B cell (primary cell): ENCODE measurements at regions of chr3 and their contacts with region 1.

Region 1: DNA sequence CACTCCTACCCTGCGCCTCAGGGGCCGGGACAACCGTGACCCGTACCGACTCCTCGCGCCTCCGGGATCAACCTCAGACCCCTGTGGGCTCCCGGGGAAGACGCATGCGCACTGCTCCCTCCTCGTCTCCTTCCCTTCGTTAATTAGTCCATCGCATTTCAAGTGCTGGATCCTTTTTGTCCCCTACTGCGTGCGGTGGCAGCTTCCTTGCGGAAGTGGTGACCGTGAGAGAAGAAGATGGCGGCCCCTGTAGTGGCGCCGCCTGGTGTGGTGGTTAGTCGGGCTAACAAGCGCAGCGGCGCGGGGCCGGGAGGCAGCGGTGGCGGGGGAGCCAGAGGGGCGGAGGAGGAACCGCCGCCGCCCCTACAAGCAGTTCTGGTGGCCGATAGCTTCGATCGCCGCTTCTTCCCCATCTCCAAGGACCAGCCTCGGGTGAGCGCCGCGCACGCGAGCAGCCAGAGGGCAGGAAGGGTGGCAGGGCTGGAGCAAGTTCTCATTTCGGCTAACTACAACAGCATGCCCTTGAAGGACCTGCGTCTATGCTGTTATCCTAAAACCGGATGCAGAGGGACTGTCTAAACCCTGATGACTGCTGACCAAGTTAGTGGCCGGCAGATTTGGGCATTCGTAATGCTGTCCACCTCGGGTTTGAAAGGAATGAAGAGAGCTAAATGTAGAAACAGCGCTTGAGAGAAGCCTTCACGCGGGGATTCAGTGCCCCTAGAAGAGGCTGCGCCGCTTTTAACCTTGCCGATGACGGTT is at the start of gene EIF2B5:
- DNase-seq: peak; percentile 94
- ATAC-seq: peak; percentile 87
- H3K4me3 ChIP-seq: peak within 1 kb of the TSS; percentile 92 to 99 (median 95)
- H3K4me3 Mint-ChIP-seq: peak within 1 kb of the TSS; percentile 94
- H3K27ac ChIP-seq: peak within 1 kb of the TSS; percentile 78 to 86
- H3K27ac Mint-ChIP-seq: peak within 1 kb of the TSS; percentile 95
- H3K4me1 ChIP-seq: peaks cover 15 to 19% of the 10 kb centered on the region in 2 donors
- H3K4me1 Mint-ChIP-seq: peaks cover 37% of the 10 kb centered on the region
- H3K27me3 ChIP-seq: no peaks in the 10 kb centered on the region
- H3K27me3 Mint-ChIP-seq: no peaks in the 10 kb centered on the region
- CTCF ChIP-seq: peak; percentile 29
- total RNA-seq, gene EIF2B5: 83.8 and 85.9 TPM in 2 replicates

Region 2: GRCh38 chr3:183884427-183885296 is 250.7 kb before region 1 on chr3 and contains the start of gene PARL:
- CTCF ChIA-PET with region 1: interaction called, 3 read pairs
- POLR2A ChIA-PET with region 1: interaction called, 3 read pairs
- intact Hi-C with region 1: loop called (anchors 2 kb)
- DNase-seq: peak; percentile 95
- ATAC-seq: peak; percentile 100
- H3K4me3 ChIP-seq: peak within 1 kb of the TSS; percentile 68 to 96 (median 84)
- H3K4me3 Mint-ChIP-seq: peak within 1 kb of the TSS; percentile 92
- H3K27ac ChIP-seq: peak within 1 kb of the TSS; percentile 39 to 75
- H3K27ac Mint-ChIP-seq: peak within 1 kb of the TSS; percentile 94
- H3K4me1 ChIP-seq: peaks cover 11 to 19% of the 10 kb centered on the region in 2 donors
- H3K4me1 Mint-ChIP-seq: peaks cover 36% of the 10 kb centered on the region
- H3K27me3 ChIP-seq: peaks cover 0 to 6% (median 0%) of the 10 kb centered on the region in 4 experiments
- H3K27me3 Mint-ChIP-seq: peaks cover 3% of the 10 kb centered on the region
- CTCF ChIP-seq: peak; percentile 90
- total RNA-seq, gene PARL: 46.7 and 51.2 TPM in 2 replicates

Region 3: GRCh38 chr3:184017672-184018423 is 117.5 kb before region 1 on chr3 and contains the start of gene ABCC5:
- CTCF ChIA-PET with region 1: interaction called, 3 read pairs
- POLR2A ChIA-PET with region 1: no interaction called
- intact Hi-C with region 1: loop called (anchors 1 kb)
- DNase-seq: peak; percentile 89
- ATAC-seq: peak; percentile 96
- H3K4me3 ChIP-seq: peak within 1 kb of the TSS; percentile 73 to 99 (median 93)
- H3K4me3 Mint-ChIP-seq: peak within 1 kb of the TSS; percentile 100
- H3K27ac ChIP-seq: peak within 1 kb of the TSS in 1 of 2 donors; percentile 10
- H3K27ac Mint-ChIP-seq: peak within 1 kb of the TSS; percentile 94
- H3K4me1 ChIP-seq: peaks cover 10 to 13% of the 10 kb centered on the region in 2 donors
- H3K4me1 Mint-ChIP-seq: peaks cover 20% of the 10 kb centered on the region
- H3K27me3 ChIP-seq: no peaks in the 10 kb centered on the region
- H3K27me3 Mint-ChIP-seq: peaks cover 15% of the 10 kb centered on the region
- CTCF ChIP-seq: peak; percentile 81
- total RNA-seq, gene ABCC5: 29.5 and 31.7 TPM in 2 replicates

Region 4: GRCh38 chr3:184154885-184155643 is 19.7 kb after region 1 on chr3 and contains the start of gene DVL3:
- CTCF ChIA-PET with region 1: interaction called, 4 read pairs
- POLR2A ChIA-PET with region 1: interaction called, 5 read pairs
- intact Hi-C with region 1: loop called (anchors 1 kb)
- DNase-seq: peak; percentile 77
- ATAC-seq: peak; percentile 83
- H3K4me3 ChIP-seq: peak within 1 kb of the TSS; percentile 70 to 81 (median 76)
- H3K4me3 Mint-ChIP-seq: peak within 1 kb of the TSS; percentile 95
- H3K27ac ChIP-seq: peak within 1 kb of the TSS; percentile 33 to 74
- H3K27ac Mint-ChIP-seq: peak within 1 kb of the TSS; percentile 87
- H3K4me1 ChIP-seq: peaks cover 13 to 34% of the 10 kb centered on the region in 2 donors
- H3K4me1 Mint-ChIP-seq: peaks cover 31% of the 10 kb centered on the region
- H3K27me3 ChIP-seq: no peaks in the 10 kb centered on the region
- H3K27me3 Mint-ChIP-seq: no peaks in the 10 kb centered on the region
- CTCF ChIP-seq: no peak
- total RNA-seq, gene DVL3: 81.3 and 92.0 TPM in 2 replicates

Region 5: DNA sequence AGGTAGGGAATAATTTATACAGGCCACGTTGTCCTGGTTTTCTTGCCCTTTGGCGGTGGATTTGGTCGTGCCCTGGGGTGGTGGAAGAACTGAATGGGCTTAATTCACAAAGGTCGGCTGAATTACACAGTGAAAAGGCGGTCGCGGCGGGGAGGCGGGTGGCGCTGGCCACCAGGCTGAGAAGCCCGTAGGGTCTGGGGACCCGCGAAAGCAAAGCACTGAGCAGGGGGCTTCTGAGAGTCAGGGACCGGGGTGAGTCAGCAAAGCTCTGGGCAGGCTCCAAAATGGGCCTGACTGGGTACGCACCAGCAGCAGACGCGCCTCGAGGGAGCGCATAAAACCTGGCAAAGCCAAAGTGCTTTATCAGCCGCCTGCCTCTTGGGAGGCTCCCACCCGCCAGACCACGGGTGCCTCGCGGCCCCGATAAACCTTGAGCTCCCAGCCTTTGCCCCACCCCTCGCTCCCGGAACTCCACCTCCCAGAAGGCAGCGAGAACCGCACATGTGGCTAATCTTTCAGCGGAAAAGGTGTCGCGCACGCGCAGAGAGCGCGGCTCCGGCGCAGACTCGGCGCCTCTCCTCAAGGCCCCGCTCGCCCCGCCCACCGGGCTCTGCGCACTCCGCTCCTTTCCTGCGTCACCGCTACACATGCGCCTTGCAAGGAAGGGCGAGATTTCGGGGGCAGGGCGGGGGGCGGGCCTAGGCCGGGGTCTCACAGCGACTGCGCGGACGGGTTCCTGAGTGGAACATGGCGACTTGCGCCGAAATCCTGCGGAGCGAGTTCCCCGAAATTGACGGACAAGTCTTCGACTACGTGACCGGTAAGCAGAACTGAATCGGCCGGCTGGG is 50.4 kb after region 1 on chr3 and contains the start of gene ABCF3:
- CTCF ChIA-PET with region 1: interaction called, 4 read pairs
- POLR2A ChIA-PET with region 1: interaction called, 5 read pairs
- intact Hi-C with region 1: loop called (anchors 1 kb)
- DNase-seq: peak; percentile 100
- ATAC-seq: peak; percentile 94
- H3K4me3 ChIP-seq: peak within 1 kb of the TSS; percentile 70 to 100 (median 97)
- H3K4me3 Mint-ChIP-seq: peak within 1 kb of the TSS; percentile 99
- H3K27ac ChIP-seq: peak within 1 kb of the TSS; percentile 48 to 68
- H3K27ac Mint-ChIP-seq: peak within 1 kb of the TSS; percentile 94
- H3K4me1 ChIP-seq: peaks cover 17 to 21% of the 10 kb centered on the region in 2 donors
- H3K4me1 Mint-ChIP-seq: peaks cover 33% of the 10 kb centered on the region
- H3K27me3 ChIP-seq: no peaks in the 10 kb centered on the region
- H3K27me3 Mint-ChIP-seq: no peaks in the 10 kb centered on the region
- CTCF ChIP-seq: no peak
- total RNA-seq, gene ABCF3: 115 and 131 TPM in 2 replicates

Region 6: GRCh38 chr3:184250167-184250828 is 115.0 kb after region 1 on chr3:
- CTCF ChIA-PET with region 1: interaction called, 5 read pairs
- POLR2A ChIA-PET with region 1: no interaction called
- intact Hi-C with region 1: loop called (anchors 1 kb)
- DNase-seq: peak; percentile 92
- ATAC-seq: peak; percentile 65
- H3K4me3 ChIP-seq: peak overlapping the region; percentile 88 to 93 (median 91)
- H3K4me3 Mint-ChIP-seq: peak overlapping the region; percentile 87
- H3K27ac ChIP-seq: peak overlapping the region in 1 of 2 donors; percentile 58
- H3K27ac Mint-ChIP-seq: peak overlapping the region; percentile 78
- H3K4me1 ChIP-seq: peaks cover 5 to 17% of the 10 kb centered on the region in 2 donors
- H3K4me1 Mint-ChIP-seq: peaks cover 9% of the 10 kb centered on the region
- H3K27me3 ChIP-seq: no peaks in the 10 kb centered on the region
- H3K27me3 Mint-ChIP-seq: no peaks in the 10 kb centered on the region
- CTCF ChIP-seq: peak; percentile 94

Region 7: DNA sequence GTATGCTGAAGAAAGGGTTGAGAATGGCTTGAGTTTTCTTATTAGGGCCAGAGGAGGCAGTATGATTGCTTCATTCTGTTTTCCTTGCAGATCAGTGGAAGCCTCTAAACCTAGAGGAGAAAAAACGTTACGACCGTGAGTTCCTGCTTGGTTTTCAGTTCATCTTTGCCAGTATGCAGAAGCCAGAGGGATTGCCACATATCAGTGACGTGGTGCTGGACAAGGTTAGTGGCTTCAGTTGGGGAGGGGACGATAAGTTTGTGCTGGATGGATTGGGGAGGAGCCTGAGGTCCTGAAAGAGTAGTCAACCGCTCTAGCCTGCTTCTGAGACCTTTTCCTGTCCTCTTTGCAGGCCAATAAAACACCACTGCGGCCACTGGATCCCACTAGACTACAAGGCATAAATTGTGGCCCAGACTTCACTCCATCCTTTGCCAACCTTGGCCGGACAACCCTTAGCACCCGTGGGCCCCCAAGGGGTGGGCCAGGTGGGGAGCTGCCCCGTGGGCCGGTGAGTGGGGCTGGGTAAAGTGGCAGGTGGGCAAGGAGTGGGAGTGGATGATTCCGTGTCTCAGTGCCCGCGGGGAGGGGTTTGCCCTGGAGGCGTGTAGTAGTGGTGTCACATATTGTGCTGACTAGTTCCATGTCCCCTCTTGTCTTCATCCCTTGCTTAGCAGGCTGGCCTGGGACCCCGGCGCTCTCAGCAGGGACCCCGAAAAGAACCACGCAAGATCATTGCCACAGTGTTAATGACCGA is 187.6 kb after region 1 on chr3:
- CTCF ChIA-PET with region 1: no interaction called
- POLR2A ChIA-PET with region 1: no interaction called
- intact Hi-C with region 1: no loop called
- DNase-seq: no peak
- ATAC-seq: no peak
- H3K4me3 ChIP-seq: no peak overlapping the region
- H3K4me3 Mint-ChIP-seq: no peak overlapping the region
- H3K27ac ChIP-seq: no peak overlapping the region
- H3K27ac Mint-ChIP-seq: no peak overlapping the region
- H3K4me1 ChIP-seq: no peaks in the 10 kb centered on the region
- H3K4me1 Mint-ChIP-seq: peaks cover 5% of the 10 kb centered on the region
- H3K27me3 ChIP-seq: no peaks in the 10 kb centered on the region
- H3K27me3 Mint-ChIP-seq: no peaks in the 10 kb centered on the region
- CTCF ChIP-seq: no peak

Region 8: GRCh38 chr3:184711493-184712247 is 576.3 kb after region 1 on chr3 and contains the start of gene MAGEF1:
- CTCF ChIA-PET with region 1: no interaction called
- POLR2A ChIA-PET with region 1: no interaction called
- intact Hi-C with region 1: loop called (anchors 5 kb)
- DNase-seq: peak; percentile 73
- ATAC-seq: peak; percentile 81
- H3K4me3 ChIP-seq: peak within 1 kb of the TSS; percentile 72 to 87 (median 77)
- H3K4me3 Mint-ChIP-seq: peak within 1 kb of the TSS; percentile 92
- H3K27ac ChIP-seq: peak within 1 kb of the TSS; percentile 73 to 78
- H3K27ac Mint-ChIP-seq: peak within 1 kb of the TSS; percentile 92
- H3K4me1 ChIP-seq: peaks cover 14 to 29% of the 10 kb centered on the region in 2 donors
- H3K4me1 Mint-ChIP-seq: peaks cover 30% of the 10 kb centered on the region
- H3K27me3 ChIP-seq: no peaks in the 10 kb centered on the region
- H3K27me3 Mint-ChIP-seq: no peaks in the 10 kb centered on the region
- CTCF ChIP-seq: no peak
- total RNA-seq, gene MAGEF1: 26.2 and 27.1 TPM in 2 replicates